ENCODE measurements at regions of chr14 and their contacts with region 1.

Region 1: DNA sequence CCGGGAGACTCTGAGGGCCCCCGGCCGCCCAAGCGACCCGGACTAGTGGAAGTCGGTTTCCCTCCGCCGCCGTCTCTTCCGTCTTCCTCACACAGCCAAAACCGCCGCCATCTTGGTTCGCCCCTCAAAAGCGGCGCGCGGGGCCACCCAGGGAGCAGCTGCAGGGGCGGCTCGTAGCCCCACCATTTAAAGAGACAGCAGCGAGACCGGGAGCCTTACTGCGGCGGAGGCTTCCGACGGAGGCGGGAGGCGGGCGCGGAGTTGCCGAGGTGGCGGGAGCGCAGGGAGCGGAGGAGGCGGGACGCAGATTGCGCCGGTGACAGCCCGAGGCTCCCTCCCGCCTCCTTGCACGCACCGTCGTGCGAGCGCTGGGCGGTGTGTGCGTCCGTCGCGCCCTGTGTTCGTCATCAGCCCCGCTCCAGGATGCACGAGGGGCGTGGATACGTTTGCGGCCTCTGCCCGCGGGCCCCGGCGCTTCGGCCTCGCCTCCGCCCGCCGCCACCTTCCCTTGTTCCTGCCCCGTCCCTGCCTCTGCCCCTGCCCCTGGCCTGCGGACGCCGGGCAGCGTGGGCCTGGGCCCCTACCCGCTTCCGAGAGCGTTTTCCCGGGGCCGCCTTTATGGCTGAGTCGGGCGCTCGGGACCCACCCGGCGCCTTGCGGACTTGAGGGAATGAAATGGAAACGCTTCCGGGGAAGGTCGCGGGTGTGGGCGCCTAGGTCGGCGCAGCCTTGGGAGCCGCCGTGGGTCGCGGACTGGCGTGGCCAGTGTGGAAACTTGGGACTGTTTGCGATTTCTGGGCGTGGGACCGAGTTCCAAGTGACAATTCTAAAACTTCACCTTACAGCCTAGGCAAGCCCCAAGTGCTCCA is at the start of gene PPP4R3A:
- DNase-seq: peak; percentile 97
- H3K4me3 ChIP-seq: peak within 1 kb of the TSS; percentile 70 to 87 (median 71)
- H3K27ac ChIP-seq: peak within 1 kb of the TSS; percentile 90
- H3K4me1 ChIP-seq: peaks cover 13% of the 10 kb centered on the region
- H3K27me3 ChIP-seq: no peaks in the 10 kb centered on the region
- CTCF ChIP-seq: no peak
- total RNA-seq, gene PPP4R3A: 47.7 to 84.1 TPM

Region 2: DNA sequence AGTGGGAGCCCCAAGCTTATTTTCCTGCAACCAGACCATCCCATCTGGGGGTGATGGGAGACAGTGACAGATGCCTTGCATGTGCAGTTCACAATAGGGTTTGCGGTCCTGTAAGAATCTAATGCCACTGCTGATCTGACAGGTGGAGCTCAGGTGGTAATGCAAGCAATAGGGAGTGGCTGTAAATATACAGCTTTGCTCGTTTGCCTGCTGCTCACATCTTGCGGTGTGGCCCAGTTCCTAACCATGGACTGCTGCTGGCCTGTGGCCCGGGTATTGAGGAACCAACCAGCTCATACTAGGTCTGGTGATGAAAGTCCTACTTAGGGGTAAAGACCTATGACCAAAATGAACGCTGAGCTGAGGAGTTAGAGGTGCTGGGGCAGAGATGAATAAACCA is 56.7 kb before region 1 on chr14:
- CTCF ChIA-PET with region 1: no interaction called
- dilution Hi-C with region 1: loop called (anchors 5 kb)
- in situ Hi-C with region 1: no loop called
- intact Hi-C with region 1: no loop called
- DNase-seq: no peak
- H3K4me3 ChIP-seq: no peak overlapping the region
- H3K27ac ChIP-seq: no peak overlapping the region
- H3K4me1 ChIP-seq: peaks cover 8% of the 10 kb centered on the region
- H3K27me3 ChIP-seq: no peaks in the 10 kb centered on the region
- CTCF ChIP-seq: no peak

Region 3: DNA sequence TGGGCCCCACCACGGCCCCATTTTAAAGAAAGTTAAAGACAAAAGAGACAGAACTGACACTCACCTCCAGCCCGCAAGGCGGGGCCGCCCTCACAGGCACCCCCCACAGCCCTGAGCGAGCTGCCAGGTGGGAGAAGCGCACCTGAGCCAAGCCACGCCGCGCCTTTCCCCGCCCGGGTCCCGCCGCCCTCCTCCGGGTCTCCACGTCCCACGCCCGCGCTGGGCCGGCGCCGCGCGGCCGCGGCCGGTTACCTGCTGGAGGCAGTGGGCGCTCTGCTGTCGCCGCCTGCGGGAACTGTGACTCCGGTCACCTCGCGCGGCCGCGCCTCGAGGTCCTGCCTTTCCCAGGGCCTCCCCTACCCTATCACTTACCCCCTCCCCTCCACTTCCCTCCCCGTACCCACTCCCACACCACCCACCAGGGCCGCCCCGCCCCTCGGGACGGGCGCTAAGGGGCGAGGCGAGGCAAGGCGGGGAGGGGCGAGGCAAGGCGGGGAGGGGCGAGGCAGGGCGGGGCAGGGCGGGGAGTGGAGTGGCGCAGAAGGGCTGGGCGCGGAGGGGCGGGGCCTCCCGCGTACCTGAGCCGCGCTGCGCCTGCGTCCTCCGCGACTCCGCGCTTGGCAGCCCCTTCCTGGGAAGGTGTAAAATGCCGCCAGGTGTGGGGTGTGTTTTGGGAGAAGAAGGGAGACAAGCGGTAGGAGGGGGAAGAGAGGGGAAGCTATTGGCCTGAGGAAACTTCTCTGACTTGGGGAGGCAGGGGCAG is 325.9 kb after region 1 on chr14:
- CTCF ChIA-PET with region 1: no interaction called
- dilution Hi-C with region 1: no loop called
- in situ Hi-C with region 1: no loop called
- intact Hi-C with region 1: loop called (anchors 5 kb)
- DNase-seq: peak; percentile 84
- H3K4me3 ChIP-seq: peak overlapping the region; percentile 86 to 91 (median 91)
- H3K27ac ChIP-seq: peak overlapping the region; percentile 55
- H3K4me1 ChIP-seq: peaks cover 8% of the 10 kb centered on the region
- H3K27me3 ChIP-seq: no peaks in the 10 kb centered on the region
- CTCF ChIP-seq: no peak

Region 4: GRCh38 chr14:91899212-91899611 is 388.8 kb after region 1 on chr14:
- CTCF ChIA-PET with region 1: no interaction called
- dilution Hi-C with region 1: no loop called
- in situ Hi-C with region 1: no loop called
- intact Hi-C with region 1: loop called (anchors 10 kb)
- DNase-seq: no peak
- H3K4me3 ChIP-seq: no peak overlapping the region
- H3K27ac ChIP-seq: no peak overlapping the region
- H3K4me1 ChIP-seq: no peaks in the 10 kb centered on the region
- H3K27me3 ChIP-seq: no peaks in the 10 kb centered on the region
- CTCF ChIP-seq: no peak